B cell (primary cell): ENCODE measurements at regions of chr9 and their contacts with region 1.

Region 1: GRCh38 chr9:120714088-120714845 is at the start of gene MEGF9:
- DNase-seq: peak; percentile 97
- ATAC-seq: peak; percentile 94
- H3K4me3 ChIP-seq: peak within 1 kb of the TSS; percentile 56 to 81 (median 68)
- H3K4me3 Mint-ChIP-seq: peak within 1 kb of the TSS; percentile 88
- H3K27ac ChIP-seq: peak within 1 kb of the TSS; percentile 43 to 72
- H3K27ac Mint-ChIP-seq: peak within 1 kb of the TSS; percentile 89
- H3K4me1 ChIP-seq: peaks cover 41 to 43% of the 10 kb centered on the region in 2 donors
- H3K4me1 Mint-ChIP-seq: peaks cover 38% of the 10 kb centered on the region
- H3K27me3 ChIP-seq: no peaks in the 10 kb centered on the region
- H3K27me3 Mint-ChIP-seq: no peaks in the 10 kb centered on the region
- CTCF ChIP-seq: no peak
- total RNA-seq, gene MEGF9: 11.3 and 11.6 TPM in 2 replicates

Region 2: GRCh38 chr9:120579750-120580590 is 134.3 kb before region 1 on chr9 and contains the start of gene CDK5RAP2:
- CTCF ChIA-PET with region 1: no interaction called
- POLR2A ChIA-PET with region 1: no interaction called
- intact Hi-C with region 1: loop called (anchors 1 kb)
- DNase-seq: peak; percentile 94
- ATAC-seq: peak; percentile 92
- H3K4me3 ChIP-seq: peak within 1 kb of the TSS; percentile 70 to 92 (median 86)
- H3K4me3 Mint-ChIP-seq: peak within 1 kb of the TSS; percentile 94
- H3K27ac ChIP-seq: peak within 1 kb of the TSS; percentile 77 to 78
- H3K27ac Mint-ChIP-seq: peak within 1 kb of the TSS; percentile 93
- H3K4me1 ChIP-seq: peaks cover 27 to 31% of the 10 kb centered on the region in 2 donors
- H3K4me1 Mint-ChIP-seq: peaks cover 53% of the 10 kb centered on the region
- H3K27me3 ChIP-seq: no peaks in the 10 kb centered on the region
- H3K27me3 Mint-ChIP-seq: no peaks in the 10 kb centered on the region
- CTCF ChIP-seq: no peak
- total RNA-seq, gene CDK5RAP2: 116 and 122 TPM in 2 replicates

Region 3: GRCh38 chr9:120619751-120620655 is 94.3 kb before region 1 on chr9:
- CTCF ChIA-PET with region 1: interaction called, 8 read pairs
- POLR2A ChIA-PET with region 1: no interaction called
- intact Hi-C with region 1: loop called (anchors 2 kb)
- DNase-seq: peak; percentile 71
- ATAC-seq: peak; percentile 68
- H3K4me3 ChIP-seq: no peak overlapping the region
- H3K4me3 Mint-ChIP-seq: no peak overlapping the region
- H3K27ac ChIP-seq: no peak overlapping the region
- H3K27ac Mint-ChIP-seq: no peak overlapping the region
- H3K4me1 ChIP-seq: no peaks in the 10 kb centered on the region
- H3K4me1 Mint-ChIP-seq: peaks cover 2% of the 10 kb centered on the region
- H3K27me3 ChIP-seq: no peaks in the 10 kb centered on the region
- H3K27me3 Mint-ChIP-seq: no peaks in the 10 kb centered on the region
- CTCF ChIP-seq: peak; percentile 97

Region 4: GRCh38 chr9:120683146-120683545 is 31.1 kb before region 1 on chr9:
- CTCF ChIA-PET with region 1: no interaction called
- POLR2A ChIA-PET with region 1: no interaction called
- intact Hi-C with region 1: no loop called
- DNase-seq: no peak
- ATAC-seq: no peak
- H3K4me3 ChIP-seq: no peak overlapping the region
- H3K4me3 Mint-ChIP-seq: no peak overlapping the region
- H3K27ac ChIP-seq: no peak overlapping the region
- H3K27ac Mint-ChIP-seq: no peak overlapping the region
- H3K4me1 ChIP-seq: peaks cover 6 to 7% of the 10 kb centered on the region in 2 donors
- H3K4me1 Mint-ChIP-seq: peaks cover 17% of the 10 kb centered on the region
- H3K27me3 ChIP-seq: no peaks in the 10 kb centered on the region
- H3K27me3 Mint-ChIP-seq: no peaks in the 10 kb centered on the region
- CTCF ChIP-seq: no peak

Region 5: DNA sequence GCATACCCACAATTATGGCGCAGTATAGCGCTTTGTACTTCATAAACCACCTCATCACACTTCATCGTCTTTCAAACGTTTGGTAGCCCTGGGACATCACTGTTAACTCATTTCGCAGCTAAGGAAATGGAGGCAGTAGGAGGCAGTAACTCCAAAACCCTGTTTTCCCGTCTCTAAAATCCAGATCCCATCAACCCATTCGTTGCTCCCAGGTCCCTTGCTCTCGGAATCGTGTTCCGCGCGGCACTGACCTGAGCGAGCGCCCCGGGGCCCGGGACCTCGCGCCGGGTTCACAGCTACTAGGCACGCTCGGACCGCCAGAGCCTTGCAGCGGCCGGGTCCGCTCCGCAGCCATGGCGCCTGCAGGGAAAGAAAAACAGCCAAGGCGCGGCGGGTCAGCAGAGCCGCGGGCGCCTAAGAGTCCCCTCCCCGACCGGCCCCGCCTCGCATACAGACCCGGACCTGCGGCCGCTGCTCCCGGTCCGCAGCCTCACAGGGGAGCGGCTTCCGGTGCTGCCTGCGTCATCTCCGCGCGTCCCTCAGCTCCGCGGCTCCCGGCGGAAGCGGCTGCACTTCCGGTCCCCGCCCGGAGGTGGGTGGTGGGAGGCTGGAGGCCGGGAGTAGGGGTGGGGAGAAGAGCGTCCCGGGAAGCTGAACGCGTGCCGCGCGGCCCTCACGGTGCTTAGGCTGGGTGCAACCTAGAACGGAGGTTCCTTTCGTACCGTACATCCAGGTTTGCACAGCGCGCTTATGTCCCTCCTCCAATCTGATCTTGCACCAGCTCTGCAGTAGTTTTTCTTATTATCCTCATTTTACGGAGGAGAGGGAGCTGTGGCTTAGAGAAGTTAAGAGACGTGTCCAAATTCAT is 78.9 kb after region 1 on chr9 and contains the start of gene FBXW2:
- CTCF ChIA-PET with region 1: no interaction called
- POLR2A ChIA-PET with region 1: no interaction called
- intact Hi-C with region 1: loop called (anchors 2 kb)
- DNase-seq: peak; percentile 88
- ATAC-seq: peak; percentile 94
- H3K4me3 ChIP-seq: peak within 1 kb of the TSS; percentile 73 to 96 (median 89)
- H3K4me3 Mint-ChIP-seq: peak within 1 kb of the TSS; percentile 92
- H3K27ac ChIP-seq: peak within 1 kb of the TSS; percentile 77 to 87
- H3K27ac Mint-ChIP-seq: peak within 1 kb of the TSS; percentile 92
- H3K4me1 ChIP-seq: peaks cover 18 to 25% of the 10 kb centered on the region in 2 donors
- H3K4me1 Mint-ChIP-seq: peaks cover 38% of the 10 kb centered on the region
- H3K27me3 ChIP-seq: no peaks in the 10 kb centered on the region
- H3K27me3 Mint-ChIP-seq: no peaks in the 10 kb centered on the region
- CTCF ChIP-seq: no peak
- total RNA-seq, gene FBXW2: 70.6 and 73.3 TPM in 2 replicates

Region 6: GRCh38 chr9:120842690-120843499 is 128.6 kb after region 1 on chr9 and contains the start of gene PSMD5:
- CTCF ChIA-PET with region 1: no interaction called
- POLR2A ChIA-PET with region 1: no interaction called
- intact Hi-C with region 1: loop called (anchors 2 kb)
- DNase-seq: peak; percentile 96
- ATAC-seq: peak; percentile 98
- H3K4me3 ChIP-seq: peak within 1 kb of the TSS; percentile 68 to 99 (median 82)
- H3K4me3 Mint-ChIP-seq: peak within 1 kb of the TSS; percentile 90
- H3K27ac ChIP-seq: peak within 1 kb of the TSS; percentile 89
- H3K27ac Mint-ChIP-seq: peak within 1 kb of the TSS; percentile 95
- H3K4me1 ChIP-seq: peaks cover 21 to 23% of the 10 kb centered on the region in 2 donors
- H3K4me1 Mint-ChIP-seq: peaks cover 27% of the 10 kb centered on the region
- H3K27me3 ChIP-seq: no peaks in the 10 kb centered on the region
- H3K27me3 Mint-ChIP-seq: no peaks in the 10 kb centered on the region
- CTCF ChIP-seq: no peak
- total RNA-seq, gene PSMD5: 25.3 and 26.8 TPM in 2 replicates

Region 7: GRCh38 chr9:121369595-121370265 is 655.5 kb after region 1 on chr9 and contains the start of gene STOM:
- CTCF ChIA-PET with region 1: no interaction called
- POLR2A ChIA-PET with region 1: interaction called, 3 read pairs
- intact Hi-C with region 1: loop called (anchors 2 kb)
- DNase-seq: no peak
- ATAC-seq: peak; percentile 56
- H3K4me3 ChIP-seq: peak within 1 kb of the TSS; percentile 58 to 93 (median 71)
- H3K4me3 Mint-ChIP-seq: peak within 1 kb of the TSS; percentile 91
- H3K27ac ChIP-seq: peak within 1 kb of the TSS; percentile 68 to 75
- H3K27ac Mint-ChIP-seq: peak within 1 kb of the TSS; percentile 91
- H3K4me1 ChIP-seq: peaks cover 19 to 20% of the 10 kb centered on the region in 2 donors
- H3K4me1 Mint-ChIP-seq: peaks cover 29% of the 10 kb centered on the region
- H3K27me3 ChIP-seq: no peaks in the 10 kb centered on the region
- H3K27me3 Mint-ChIP-seq: no peaks in the 10 kb centered on the region
- CTCF ChIP-seq: no peak
- total RNA-seq, gene STOM: 6.1 and 6.3 TPM in 2 replicates